PC-3 (cell line): ENCODE measurements at regions of chr7 and their contacts with region 1.

Region 1: DNA sequence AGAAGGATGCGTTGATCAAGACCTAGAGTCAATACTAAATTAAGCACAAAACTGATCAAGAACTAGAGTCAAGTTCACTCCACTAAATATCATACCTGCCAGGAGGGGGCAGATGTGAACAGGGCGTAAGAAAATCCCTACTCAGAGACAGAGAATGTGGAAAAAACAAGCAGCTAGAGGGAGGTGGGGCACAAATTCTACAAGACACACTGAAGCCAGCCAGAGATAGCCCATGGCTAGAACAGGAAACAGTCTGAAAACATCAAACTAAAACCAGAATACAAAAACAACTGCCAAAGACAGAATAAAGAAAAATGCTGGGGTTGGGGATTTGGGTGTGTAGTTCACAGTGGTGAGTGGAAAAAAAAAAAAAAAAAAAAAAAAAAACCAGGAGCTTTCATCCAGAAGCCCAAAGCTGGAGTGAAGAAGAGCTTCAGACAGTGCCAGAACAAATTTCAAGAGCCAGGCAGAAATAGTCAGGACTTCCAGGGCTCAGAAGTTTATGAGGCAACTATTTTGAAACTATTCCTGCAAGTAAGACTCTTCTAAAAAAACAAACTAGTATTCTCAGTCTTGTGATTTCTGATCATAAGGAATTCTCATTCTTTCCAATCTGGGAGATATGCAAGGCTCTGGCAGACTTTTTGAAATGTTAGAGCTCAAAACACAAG is 118.3 kb downstream of the CCDC71L start:
- DNase-seq: peak; percentile 85
- ATAC-seq: peak; percentile 87
- H3K4me3 ChIP-seq: no peak overlapping the region
- H3K27ac ChIP-seq: no peak overlapping the region
- H3K4me1 ChIP-seq: peaks cover 20% of the 10 kb centered on the region
- H3K27me3 ChIP-seq: no peaks in the 10 kb centered on the region
- CTCF ChIP-seq: peak; percentile 87

Region 2: GRCh38 chr7:106353948-106354347 is 188.7 kb before region 1 on chr7:
- CTCF ChIA-PET with region 1: no interaction called
- POLR2A ChIA-PET with region 1: no interaction called
- intact Hi-C with region 1: no loop called
- DNase-seq: no peak
- ATAC-seq: no peak
- H3K4me3 ChIP-seq: no peak overlapping the region
- H3K27ac ChIP-seq: no peak overlapping the region
- H3K4me1 ChIP-seq: no peaks in the 10 kb centered on the region
- H3K27me3 ChIP-seq: no peaks in the 10 kb centered on the region
- CTCF ChIP-seq: no peak

Region 3: DNA sequence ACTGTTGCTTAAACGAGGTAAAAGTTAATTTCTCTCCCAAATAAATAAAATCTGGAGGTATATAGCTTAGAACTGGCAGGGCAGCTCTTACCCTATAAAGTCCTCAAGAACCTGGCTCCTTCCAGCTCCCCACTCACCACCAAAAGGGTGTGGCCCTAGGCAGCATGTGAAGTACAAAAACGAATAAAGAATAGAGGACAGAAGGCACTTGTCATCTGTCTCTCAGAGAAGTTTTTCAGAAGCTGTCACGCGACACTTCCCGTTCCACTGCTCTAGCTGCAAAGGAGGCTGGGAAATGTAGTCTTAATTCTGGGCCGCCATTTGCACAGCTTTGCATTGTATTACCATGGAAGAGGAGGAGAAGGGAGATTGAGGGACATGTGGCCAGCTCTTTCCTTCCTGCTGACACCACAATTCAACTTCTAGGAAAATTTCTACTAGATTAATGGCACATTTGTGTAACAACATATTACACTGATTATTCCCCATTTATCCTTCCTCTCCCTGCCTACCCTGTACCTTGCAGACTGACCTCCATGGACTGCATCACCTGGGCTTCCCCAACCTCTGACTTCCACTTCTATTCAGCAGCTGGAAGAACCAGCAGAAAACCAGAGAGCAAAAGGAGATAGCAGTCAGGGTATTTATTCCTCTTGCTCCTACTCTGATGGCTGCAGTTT is 56.1 kb after region 1 on chr7:
- CTCF ChIA-PET with region 1: interaction called, 13 read pairs
- POLR2A ChIA-PET with region 1: no interaction called
- intact Hi-C with region 1: no loop called
- DNase-seq: peak; percentile 80
- ATAC-seq: peak; percentile 96
- H3K4me3 ChIP-seq: 0 out of 2 replicates have a peak overlapping the region, but pooled peaks have one; percentile 13
- H3K27ac ChIP-seq: peak overlapping the region; percentile 80
- H3K4me1 ChIP-seq: peaks cover 17% of the 10 kb centered on the region
- H3K27me3 ChIP-seq: no peaks in the 10 kb centered on the region
- CTCF ChIP-seq: no peak

Region 4: DNA sequence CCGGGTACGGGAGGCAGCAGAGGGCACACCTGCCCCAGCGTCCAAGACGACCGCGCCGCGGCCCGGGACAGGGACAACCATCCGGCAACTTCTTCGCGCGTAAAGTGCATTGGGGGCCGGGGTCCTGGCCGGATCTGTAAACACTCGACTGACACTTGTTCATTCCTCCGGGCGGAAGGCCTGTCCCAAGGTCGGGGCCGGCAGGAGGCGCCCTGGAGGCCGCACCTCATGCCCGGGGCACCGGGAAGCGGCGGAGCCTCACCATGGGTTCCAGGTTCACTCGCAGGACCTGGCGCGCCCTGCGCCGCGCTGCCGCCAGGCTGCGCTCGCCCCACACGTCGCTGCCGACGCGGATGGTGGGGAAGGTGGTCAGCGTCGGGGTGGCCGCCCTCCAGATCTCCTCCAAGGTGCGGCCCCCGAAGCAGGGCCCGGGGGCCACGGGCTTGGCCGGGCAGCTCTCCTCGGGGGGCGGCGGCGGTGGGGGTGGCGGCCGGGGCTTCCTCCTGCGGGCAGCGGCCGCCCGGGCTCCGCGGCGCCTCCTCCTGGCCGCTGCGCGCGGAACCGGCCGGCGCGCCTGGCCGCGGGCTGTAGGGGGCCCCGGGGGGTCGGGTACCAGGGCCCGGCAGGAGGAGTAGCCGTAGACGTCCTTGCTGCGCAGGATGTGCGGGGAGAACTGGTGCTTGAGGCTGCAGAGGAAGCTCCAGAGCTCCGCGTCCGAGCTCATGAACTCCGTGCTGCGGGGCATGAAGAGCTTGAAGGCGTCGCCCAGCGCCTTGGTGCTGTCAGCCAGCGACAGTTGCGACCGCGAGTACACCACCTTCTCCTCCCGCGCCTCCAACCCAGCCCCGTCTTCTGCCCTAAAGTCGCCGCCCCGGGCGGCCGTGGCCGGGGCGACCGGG is 117.5 kb after region 1 on chr7:
- CTCF ChIA-PET with region 1: interaction called, 17 read pairs
- POLR2A ChIA-PET with region 1: interaction called, 6 read pairs
- intact Hi-C with region 1: loop called (anchors 1 kb)
- DNase-seq: peak; percentile 79
- ATAC-seq: peak; percentile 66
- H3K4me3 ChIP-seq: peak overlapping the region; percentile 88
- H3K27ac ChIP-seq: peak overlapping the region; percentile 38
- H3K4me1 ChIP-seq: peaks cover 8% of the 10 kb centered on the region; the same call in 1 of the 2 replicates
- H3K27me3 ChIP-seq: no peaks in the 10 kb centered on the region
- CTCF ChIP-seq: peak; percentile 80

Region 5: GRCh38 chr7:106736508-106737201 is 194.0 kb after region 1 on chr7:
- CTCF ChIA-PET with region 1: interaction called, 35 read pairs
- POLR2A ChIA-PET with region 1: no interaction called
- intact Hi-C with region 1: loop called (anchors 1 kb)
- DNase-seq: peak; percentile 72
- ATAC-seq: peak; percentile 97
- H3K4me3 ChIP-seq: no peak overlapping the region
- H3K27ac ChIP-seq: no peak overlapping the region
- H3K4me1 ChIP-seq: no peaks in the 10 kb centered on the region
- H3K27me3 ChIP-seq: no peaks in the 10 kb centered on the region
- CTCF ChIP-seq: peak; percentile 73

Region 6: GRCh38 chr7:106779877-106780276 is 237.2 kb after region 1 on chr7:
- CTCF ChIA-PET with region 1: interaction called, 12 read pairs
- POLR2A ChIA-PET with region 1: no interaction called
- intact Hi-C with region 1: no loop called
- DNase-seq: peak; percentile 40
- ATAC-seq: no peak
- H3K4me3 ChIP-seq: no peak overlapping the region
- H3K27ac ChIP-seq: no peak overlapping the region
- H3K4me1 ChIP-seq: peaks cover 28% of the 10 kb centered on the region
- H3K27me3 ChIP-seq: no peaks in the 10 kb centered on the region
- CTCF ChIP-seq: peak; percentile 39